ENCODE measurements at regions of chr7 and their contacts with region 1.

Region 1: DNA sequence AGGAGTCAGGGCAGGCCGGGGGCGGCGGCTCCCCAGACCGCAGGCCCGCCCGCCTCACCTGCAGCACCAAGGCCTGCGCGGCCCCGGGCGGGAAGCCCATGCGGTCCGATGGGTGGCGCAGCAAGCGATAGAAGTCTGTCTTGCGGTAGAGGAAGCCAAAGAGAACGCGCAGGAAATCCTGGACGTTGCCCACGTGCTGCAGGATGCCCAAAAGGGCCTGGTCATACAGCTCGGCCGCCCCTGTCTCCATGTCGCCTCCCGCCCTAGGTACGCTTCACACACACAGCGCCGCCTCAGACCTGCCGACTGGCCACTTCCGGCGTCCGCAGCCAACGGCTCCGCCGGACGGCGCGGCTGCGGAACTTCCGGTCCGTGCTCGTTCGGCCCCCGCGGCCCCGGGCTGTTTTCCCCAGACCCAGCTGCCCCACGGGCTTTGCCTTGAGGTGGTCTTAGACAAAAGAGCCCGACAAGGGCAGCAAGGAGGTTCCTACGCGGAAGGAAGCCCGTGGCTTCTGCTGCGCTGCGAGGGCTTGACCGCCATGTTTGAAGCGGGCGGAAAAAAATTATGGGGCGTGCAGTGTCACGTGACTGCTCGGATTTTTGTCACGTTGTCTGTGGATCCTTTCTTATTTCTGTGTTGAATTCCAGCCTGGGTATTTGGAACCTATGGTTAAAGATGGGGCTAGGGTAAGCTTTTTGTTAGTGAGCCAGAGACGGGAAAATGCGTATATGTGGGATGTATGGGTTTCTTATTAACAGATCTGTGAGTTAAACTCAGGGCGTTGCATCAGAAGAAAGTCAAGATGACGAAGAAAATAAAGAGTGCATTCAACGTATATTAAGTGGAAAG is at the start of gene NUDCD3:
- DNase-seq: peak; percentile 87 to 88
- H3K4me3 ChIP-seq: peak within 1 kb of the TSS; percentile 81
- H3K4me3 Mint-ChIP-seq: peak within 1 kb of the TSS; percentile 80
- H3K27ac Mint-ChIP-seq: peak within 1 kb of the TSS; percentile 90
- H3K4me1 ChIP-seq: peaks cover 10% of the 10 kb centered on the region; the same call in 1 of the 2 replicates
- H3K4me1 Mint-ChIP-seq: peaks cover 24% of the 10 kb centered on the region
- H3K27me3 ChIP-seq: no peaks in the 10 kb centered on the region
- H3K27me3 Mint-ChIP-seq: no peaks in the 10 kb centered on the region
- CTCF ChIP-seq: no peak
- total RNA-seq, gene NUDCD3: 103 and 116 TPM in 2 replicates

Region 2: GRCh38 chr7:43501870-43502269 is 988.7 kb before region 1 on chr7:
- CTCF ChIA-PET with region 1: no interaction called
- POLR2A ChIA-PET with region 1: interaction called, 10 read pairs
- intact Hi-C with region 1: no loop called
- DNase-seq: peak in 1 of 2 experiments; percentile 31
- H3K4me3 ChIP-seq: no peak overlapping the region
- H3K4me3 Mint-ChIP-seq: no peak overlapping the region
- H3K27ac Mint-ChIP-seq: no peak overlapping the region
- H3K4me1 ChIP-seq: peaks cover 18% of the 10 kb centered on the region
- H3K4me1 Mint-ChIP-seq: no peaks in the 10 kb centered on the region
- H3K27me3 ChIP-seq: no peaks in the 10 kb centered on the region
- H3K27me3 Mint-ChIP-seq: no peaks in the 10 kb centered on the region
- CTCF ChIP-seq: no peak

Region 3: GRCh38 chr7:44541028-44541869 is 50.7 kb after region 1 on chr7 and contains the start of gene NPC1L1:
- CTCF ChIA-PET with region 1: no interaction called
- POLR2A ChIA-PET with region 1: no interaction called
- intact Hi-C with region 1: loop called (anchors 2 kb)
- DNase-seq: peak; percentile 62 to 77
- H3K4me3 ChIP-seq: peak within 1 kb of the TSS; percentile 21
- H3K4me3 Mint-ChIP-seq: no peak within 1 kb of the TSS
- H3K27ac Mint-ChIP-seq: peak within 1 kb of the TSS; percentile 66
- H3K4me1 ChIP-seq: peaks cover 31% of the 10 kb centered on the region
- H3K4me1 Mint-ChIP-seq: peaks cover 27% of the 10 kb centered on the region
- H3K27me3 ChIP-seq: no peaks in the 10 kb centered on the region
- H3K27me3 Mint-ChIP-seq: no peaks in the 10 kb centered on the region
- CTCF ChIP-seq: no peak
- total RNA-seq, gene NPC1L1: 5.9 and 6.5 TPM in 2 replicates

Region 4: DNA sequence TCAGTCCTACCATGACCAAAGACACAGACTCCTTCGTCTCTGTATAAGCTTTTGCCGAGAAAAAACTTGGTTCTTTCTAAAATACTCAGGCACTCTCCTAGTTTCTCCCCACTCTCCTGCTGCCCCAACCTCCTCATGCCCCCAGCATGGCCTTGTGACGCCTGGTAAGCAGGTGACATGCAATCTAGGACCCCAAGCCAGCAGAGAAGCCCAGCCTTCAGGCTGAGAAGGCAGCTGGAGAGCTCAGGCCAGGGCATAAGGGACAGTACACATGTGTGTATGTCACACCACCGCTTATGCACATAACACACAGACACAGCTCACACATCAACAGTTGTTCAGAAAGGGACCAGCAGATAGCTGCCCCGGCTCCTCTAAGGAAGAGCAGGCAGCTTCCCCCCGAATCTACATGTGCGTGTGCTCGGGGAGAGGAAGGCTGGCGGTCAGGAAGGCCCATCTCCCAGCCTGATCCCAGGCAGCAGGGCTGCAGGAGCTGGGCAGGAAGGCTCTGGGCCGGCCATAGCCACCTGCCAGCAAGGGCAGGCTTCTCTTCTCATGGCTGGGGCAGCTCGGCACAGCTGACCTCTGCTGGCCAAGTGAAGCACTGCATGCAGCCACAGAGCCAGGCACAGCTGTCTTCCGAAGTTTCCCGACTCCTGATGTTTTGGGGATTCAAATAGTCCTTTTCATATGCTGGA is 74.7 kb after region 1 on chr7:
- CTCF ChIA-PET with region 1: interaction called, 10 read pairs
- POLR2A ChIA-PET with region 1: no interaction called
- intact Hi-C with region 1: loop called (anchors 1 kb)
- DNase-seq: peak; percentile 65 to 79
- H3K4me3 ChIP-seq: no peak overlapping the region
- H3K4me3 Mint-ChIP-seq: no peak overlapping the region
- H3K27ac Mint-ChIP-seq: peak overlapping the region; percentile 82
- H3K4me1 ChIP-seq: peaks cover 27% of the 10 kb centered on the region
- H3K4me1 Mint-ChIP-seq: peaks cover 20% of the 10 kb centered on the region
- H3K27me3 ChIP-seq: no peaks in the 10 kb centered on the region
- H3K27me3 Mint-ChIP-seq: no peaks in the 10 kb centered on the region
- CTCF ChIP-seq: peak; percentile 94 to 97

Region 5: DNA sequence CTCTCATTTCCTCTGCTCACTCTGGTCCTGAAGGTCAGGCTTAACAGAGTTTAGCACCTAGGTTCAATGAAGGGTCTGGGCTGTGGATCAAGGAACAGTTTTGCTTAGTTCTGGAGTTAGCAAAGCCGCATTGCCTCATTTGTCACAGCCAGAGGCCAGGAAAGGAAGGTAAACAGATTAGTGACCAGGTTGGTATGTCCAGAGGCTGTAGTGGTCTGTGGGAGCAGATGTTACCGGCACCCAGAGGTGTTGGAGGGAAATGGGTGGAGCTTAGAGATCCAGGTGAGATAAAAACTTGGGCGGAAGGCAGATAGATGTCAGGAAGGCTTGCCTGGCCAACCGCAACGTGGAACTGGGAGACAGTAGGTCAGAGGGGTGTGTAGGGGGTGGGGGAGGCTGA is 221.4 kb after region 1 on chr7:
- CTCF ChIA-PET with region 1: no interaction called
- POLR2A ChIA-PET with region 1: no interaction called
- intact Hi-C with region 1: no loop called
- DNase-seq: peak; percentile 65 to 77
- H3K4me3 ChIP-seq: no peak overlapping the region
- H3K4me3 Mint-ChIP-seq: peak overlapping the region; percentile 4
- H3K27ac Mint-ChIP-seq: peak overlapping the region; percentile 33
- H3K4me1 ChIP-seq: peaks cover 16% of the 10 kb centered on the region
- H3K4me1 Mint-ChIP-seq: peaks cover 20% of the 10 kb centered on the region
- H3K27me3 ChIP-seq: no peaks in the 10 kb centered on the region
- H3K27me3 Mint-ChIP-seq: no peaks in the 10 kb centered on the region
- CTCF ChIP-seq: no peak

Measured in Caco-2 (cell line).